Lower lobe of right lung (tissue), 2 donors: ENCODE measurements at regions of chr17 and their contacts with region 1.

Region 1: GRCh38 chr17:70034158-70034557 is 40.9 kb upstream of the KCNJ16 start:
- DNase-seq: no peak
- ATAC-seq: no peak
- H3K4me3 ChIP-seq: no peak overlapping the region
- H3K27ac ChIP-seq: no peak overlapping the region
- H3K4me1 ChIP-seq: no peaks in the 10 kb centered on the region
- H3K27me3 ChIP-seq: no peaks in the 10 kb centered on the region
- CTCF ChIP-seq: no peak

Region 2: GRCh38 chr17:69928611-69929010 is 105.5 kb before region 1 on chr17:
- intact Hi-C with region 1: no loop called
- DNase-seq: no peak
- ATAC-seq: no peak
- H3K4me3 ChIP-seq: no peak overlapping the region
- H3K27ac ChIP-seq: no peak overlapping the region
- H3K4me1 ChIP-seq: no peaks in the 10 kb centered on the region
- H3K27me3 ChIP-seq: no peaks in the 10 kb centered on the region
- CTCF ChIP-seq: no peak

Region 3: DNA sequence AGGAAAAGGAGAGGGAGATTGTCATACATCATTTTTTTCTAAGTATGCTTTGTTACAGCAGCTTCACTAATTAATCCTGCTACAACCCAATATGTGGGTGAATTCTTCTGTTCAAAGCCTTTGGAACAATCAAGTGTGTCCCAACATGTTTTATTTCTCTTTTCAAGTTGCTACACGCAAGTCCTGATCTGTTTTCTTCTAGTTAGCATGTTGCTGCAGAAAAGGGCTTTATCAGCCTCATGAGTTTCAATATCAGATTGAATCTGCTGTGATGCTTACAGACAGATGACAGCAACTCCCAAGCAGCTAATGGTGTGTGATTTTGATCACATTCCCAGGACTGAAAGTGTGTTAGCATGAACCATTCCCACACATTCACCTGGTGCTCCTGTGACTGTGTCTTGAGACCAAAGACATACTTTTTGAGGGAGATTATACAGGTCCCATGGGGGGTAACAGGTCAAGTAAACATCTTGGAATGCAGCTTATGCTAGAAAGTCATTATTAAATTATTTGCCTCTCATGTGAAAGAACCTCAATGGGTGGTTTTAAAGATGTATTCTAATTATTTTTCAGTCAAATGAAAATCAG is 56.0 kb before region 1 on chr17:
- intact Hi-C with region 1: loop called (anchors 10 kb)
- DNase-seq: no peak
- ATAC-seq: no peak
- H3K4me3 ChIP-seq: no peak overlapping the region
- H3K27ac ChIP-seq: no peak overlapping the region
- H3K4me1 ChIP-seq: no peaks in the 10 kb centered on the region
- H3K27me3 ChIP-seq: no peaks in the 10 kb centered on the region
- CTCF ChIP-seq: no peak

Region 4: DNA sequence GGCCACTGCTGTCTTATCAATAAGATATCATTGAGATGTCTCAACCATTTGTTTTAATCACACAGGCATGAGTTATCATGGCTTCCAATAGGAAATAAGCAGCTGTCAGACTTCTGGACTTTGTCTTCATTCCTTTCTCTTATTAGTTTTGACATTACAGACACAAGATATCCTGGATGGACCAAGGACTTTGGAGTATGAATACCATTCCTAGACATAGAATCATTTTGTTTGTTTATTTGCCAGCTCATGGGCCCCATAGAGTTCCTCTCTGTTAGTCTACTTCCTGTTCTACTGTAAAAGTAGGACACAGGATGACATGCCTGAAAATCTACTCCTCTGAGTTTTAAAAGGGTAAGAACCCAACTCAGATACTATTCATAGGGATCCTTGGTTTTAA is 36.8 kb before region 1 on chr17:
- intact Hi-C with region 1: no loop called
- DNase-seq: no peak
- ATAC-seq: no peak
- H3K4me3 ChIP-seq: no peak overlapping the region
- H3K27ac ChIP-seq: no peak overlapping the region
- H3K4me1 ChIP-seq: no peaks in the 10 kb centered on the region
- H3K27me3 ChIP-seq: no peaks in the 10 kb centered on the region
- CTCF ChIP-seq: no peak